Activated B cell treated with CpG ODN at 0.5 μM for 24 hours (primary cell): ENCODE measurements at regions of chr11 and their contacts with region 1.

Region 1: DNA sequence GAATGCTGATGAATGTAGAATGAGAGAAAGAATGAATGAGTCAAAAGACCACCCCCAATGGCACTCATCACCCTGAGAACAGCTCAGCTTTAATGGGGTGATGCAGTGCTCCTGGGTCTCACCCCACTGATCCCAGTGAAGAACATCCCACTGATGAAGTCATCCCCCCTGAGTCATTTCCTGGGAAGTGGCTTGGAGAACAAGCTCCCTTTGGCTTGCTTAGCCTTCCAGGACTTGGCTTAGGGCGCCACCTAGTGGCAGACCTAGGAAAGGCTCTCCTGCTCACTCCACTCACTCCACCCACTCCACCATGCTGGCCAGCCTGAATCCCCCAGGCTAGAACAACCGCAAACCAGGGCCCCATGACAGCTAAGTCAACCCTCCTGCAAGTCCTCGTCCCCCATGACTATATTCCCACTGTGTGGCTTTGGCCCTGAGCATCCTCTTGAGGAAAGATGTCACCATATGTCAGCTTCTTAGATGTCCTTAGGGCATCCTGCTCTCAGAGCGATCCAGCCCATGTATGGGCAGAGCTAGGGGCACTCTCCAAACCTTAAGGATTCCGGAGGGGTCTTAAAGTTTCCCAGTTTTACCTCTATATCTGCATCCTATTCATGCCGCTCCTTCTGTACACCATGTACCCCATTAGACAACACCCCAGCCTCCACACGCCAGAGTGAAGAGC is 17.8 kb upstream of the TMPRSS13 start:
- DNase-seq: peak; percentile 79
- ATAC-seq: peak; percentile 34
- H3K4me3 Mint-ChIP-seq: no peak overlapping the region
- H3K27ac Mint-ChIP-seq: peak overlapping the region; percentile 62
- H3K4me1 Mint-ChIP-seq: peaks cover 60% of the 10 kb centered on the region
- H3K27me3 Mint-ChIP-seq: peaks cover 2% of the 10 kb centered on the region
- CTCF ChIP-seq: peak; percentile 86

Region 2: GRCh38 chr11:117817368-117818040 is 129.5 kb before region 1 on chr11:
- CTCF ChIA-PET with region 1: interaction called, 110 read pairs
- POLR2A ChIA-PET with region 1: interaction called, 49 read pairs
- intact Hi-C with region 1: loop called (anchors 2 kb)
- DNase-seq: peak; percentile 81
- ATAC-seq: peak; percentile 17
- H3K4me3 Mint-ChIP-seq: peak overlapping the region; percentile 88
- H3K27ac Mint-ChIP-seq: peak overlapping the region; percentile 97
- H3K4me1 Mint-ChIP-seq: peaks cover 75% of the 10 kb centered on the region
- H3K27me3 Mint-ChIP-seq: peaks cover 3% of the 10 kb centered on the region
- CTCF ChIP-seq: peak; percentile 80

Region 3: GRCh38 chr11:117862019-117862725 is 84.8 kb before region 1 on chr11:
- CTCF ChIA-PET with region 1: no interaction called
- POLR2A ChIA-PET with region 1: no interaction called
- intact Hi-C with region 1: no loop called
- DNase-seq: no peak
- ATAC-seq: no peak
- H3K4me3 Mint-ChIP-seq: no peak overlapping the region
- H3K27ac Mint-ChIP-seq: no peak overlapping the region
- H3K4me1 Mint-ChIP-seq: no peaks in the 10 kb centered on the region
- H3K27me3 Mint-ChIP-seq: peaks cover 18% of the 10 kb centered on the region
- CTCF ChIP-seq: no peak

Region 4: DNA sequence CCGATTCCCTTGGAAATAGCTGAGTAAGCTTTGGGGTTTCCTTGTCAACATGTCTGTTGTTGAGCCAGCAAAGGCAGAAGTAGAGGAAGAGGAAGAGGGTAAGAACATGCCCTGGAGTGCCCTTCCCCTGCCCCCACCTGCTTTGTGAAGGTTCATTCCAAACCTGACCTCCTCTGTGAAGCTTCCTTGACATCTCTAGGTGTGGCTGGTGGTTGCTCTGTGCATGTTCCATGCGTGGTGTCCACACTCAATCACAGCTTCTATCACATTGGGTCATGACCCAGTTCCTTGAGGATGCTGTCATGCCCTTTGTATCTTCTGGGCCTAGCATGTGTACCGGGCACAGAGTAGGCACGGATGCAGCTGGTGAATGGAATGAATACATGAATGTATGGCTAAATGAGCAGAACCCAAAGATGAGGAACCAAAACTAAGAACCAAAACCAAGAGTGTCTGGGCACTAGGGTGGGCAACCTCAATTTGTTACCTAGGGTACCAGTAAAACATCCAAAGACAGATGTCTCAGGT is 46.8 kb before region 1 on chr11:
- CTCF ChIA-PET with region 1: interaction called, 6 read pairs
- POLR2A ChIA-PET with region 1: interaction called, 4 read pairs
- intact Hi-C with region 1: loop called (anchors 2 kb)
- DNase-seq: peak; percentile 40
- ATAC-seq: peak; percentile 83
- H3K4me3 Mint-ChIP-seq: peak overlapping the region; percentile 9
- H3K27ac Mint-ChIP-seq: peak overlapping the region; percentile 87
- H3K4me1 Mint-ChIP-seq: peaks cover 26% of the 10 kb centered on the region
- H3K27me3 Mint-ChIP-seq: no peaks in the 10 kb centered on the region
- CTCF ChIP-seq: no peak

Region 5: DNA sequence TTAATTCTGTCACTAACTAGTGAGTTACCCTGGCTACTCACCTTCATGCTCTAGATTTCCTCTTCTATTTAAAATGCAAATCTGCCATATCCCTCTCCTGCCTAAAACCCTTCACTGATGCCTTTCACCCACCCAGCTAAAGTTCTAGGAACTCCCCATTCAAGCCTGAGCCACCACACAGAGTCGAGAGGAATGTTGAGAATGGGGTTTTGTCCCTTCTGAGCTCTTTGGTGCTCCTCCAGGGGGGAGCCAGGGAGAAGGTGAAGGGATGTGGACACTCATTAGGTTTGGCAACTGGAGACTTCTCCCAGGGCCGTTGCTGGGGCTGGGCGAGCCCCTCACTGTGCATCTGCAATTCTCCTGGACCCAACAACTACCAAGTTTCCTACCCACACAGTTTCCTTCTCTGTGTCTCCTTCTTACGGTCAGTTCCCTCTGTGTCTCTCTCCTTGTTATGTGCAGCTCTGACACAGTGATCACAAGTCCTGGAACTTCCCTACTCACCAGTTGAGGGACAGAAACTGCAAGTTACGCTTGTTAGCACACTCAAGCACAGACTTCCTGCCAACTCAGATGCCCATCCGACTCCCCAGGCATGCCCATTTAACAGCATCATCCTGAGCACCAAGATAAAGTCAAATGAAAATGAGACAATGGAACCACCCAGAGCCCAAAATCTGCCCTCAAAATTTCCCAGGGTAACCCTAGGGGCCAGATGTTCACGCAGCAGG is 32.7 kb after region 1 on chr11:
- CTCF ChIA-PET with region 1: interaction called, 47 read pairs
- POLR2A ChIA-PET with region 1: interaction called, 930 read pairs
- intact Hi-C with region 1: no loop called
- DNase-seq: no peak
- ATAC-seq: peak; percentile 74
- H3K4me3 Mint-ChIP-seq: peak overlapping the region; percentile 64
- H3K27ac Mint-ChIP-seq: peak overlapping the region; percentile 87
- H3K4me1 Mint-ChIP-seq: peaks cover 75% of the 10 kb centered on the region
- H3K27me3 Mint-ChIP-seq: no peaks in the 10 kb centered on the region
- CTCF ChIP-seq: no peak

Region 6: DNA sequence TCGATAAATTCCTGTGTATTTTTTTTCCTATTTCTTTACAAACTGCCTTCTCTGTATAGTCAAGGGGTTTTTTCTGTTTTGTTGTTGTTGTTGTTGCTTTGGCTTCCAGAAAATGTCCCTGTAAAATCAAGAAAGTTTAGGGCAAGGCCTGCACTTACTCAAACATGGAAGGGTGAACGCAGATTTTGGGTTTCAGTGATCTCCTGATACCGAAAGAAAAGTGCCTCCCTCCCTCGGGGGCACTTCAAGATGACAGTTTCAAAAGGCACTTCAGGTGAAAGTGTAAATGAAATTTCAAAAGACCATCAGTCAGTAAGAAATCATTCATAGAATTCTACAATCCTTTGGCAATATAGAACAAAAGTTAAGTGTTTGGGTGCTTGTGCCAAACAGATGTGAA is 86.5 kb after region 1 on chr11:
- CTCF ChIA-PET with region 1: interaction called, 6 read pairs
- POLR2A ChIA-PET with region 1: interaction called, 11 read pairs
- intact Hi-C with region 1: no loop called
- DNase-seq: no peak
- ATAC-seq: no peak
- H3K4me3 Mint-ChIP-seq: no peak overlapping the region
- H3K27ac Mint-ChIP-seq: peak overlapping the region; percentile 24
- H3K4me1 Mint-ChIP-seq: peaks cover 11% of the 10 kb centered on the region
- H3K27me3 Mint-ChIP-seq: no peaks in the 10 kb centered on the region
- CTCF ChIP-seq: no peak